Activated naive CD4-positive, alpha-beta T cell treated with anti-CD3 and anti-CD28 coated beads for 36 hours (primary cell): ENCODE measurements at regions of chr4 and their contacts with region 1.

Region 1: DNA sequence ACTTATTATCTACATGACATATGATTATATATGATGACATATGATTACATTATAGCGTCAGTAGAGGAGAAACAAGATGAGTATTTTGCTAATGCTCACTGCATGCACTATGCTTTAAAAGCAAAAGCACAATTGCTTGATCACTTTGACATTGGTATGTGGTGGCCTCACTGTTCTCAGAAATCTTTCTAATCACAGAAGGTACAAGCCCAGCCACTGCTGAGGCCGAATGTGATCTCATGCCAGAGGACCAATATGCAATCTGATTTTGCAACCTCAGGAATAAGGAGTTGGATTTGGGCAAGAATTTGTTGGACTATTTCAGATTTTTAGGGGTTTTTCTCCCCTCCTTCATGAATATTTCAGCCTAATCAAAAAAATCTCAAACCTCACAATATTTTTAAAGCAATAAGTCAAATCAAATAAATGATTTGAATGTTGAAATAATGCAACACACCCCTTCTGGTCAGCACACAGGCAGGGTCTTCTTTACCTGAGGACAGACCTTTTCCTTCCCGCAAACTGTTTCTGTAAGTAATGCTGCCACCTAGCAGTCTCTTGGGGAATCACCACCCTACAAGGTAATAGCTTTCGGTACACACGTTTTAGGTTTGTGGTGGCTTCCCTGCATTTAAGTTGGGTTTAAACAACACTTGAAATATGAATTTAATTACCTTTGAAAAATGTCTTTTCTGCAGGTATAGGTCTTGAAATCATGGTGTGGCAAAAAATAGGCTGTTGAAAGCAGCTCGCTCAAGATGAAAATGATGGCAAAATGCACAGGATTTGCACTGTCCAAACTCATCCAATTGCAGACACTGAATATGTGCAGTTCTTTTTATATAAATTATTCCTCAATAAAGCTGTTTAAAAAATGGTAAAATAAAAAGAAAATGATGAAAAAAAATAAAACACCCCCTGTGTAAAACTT is 4.8 kb upstream of the CXCL13 start:
- DNase-seq: peak; percentile 59
- H3K4me3 Mint-ChIP-seq: no peak overlapping the region
- H3K27ac Mint-ChIP-seq: no peak overlapping the region
- H3K4me1 Mint-ChIP-seq: peaks cover 13% of the 10 kb centered on the region
- H3K27me3 Mint-ChIP-seq: peaks cover 11% of the 10 kb centered on the region

Region 2: DNA sequence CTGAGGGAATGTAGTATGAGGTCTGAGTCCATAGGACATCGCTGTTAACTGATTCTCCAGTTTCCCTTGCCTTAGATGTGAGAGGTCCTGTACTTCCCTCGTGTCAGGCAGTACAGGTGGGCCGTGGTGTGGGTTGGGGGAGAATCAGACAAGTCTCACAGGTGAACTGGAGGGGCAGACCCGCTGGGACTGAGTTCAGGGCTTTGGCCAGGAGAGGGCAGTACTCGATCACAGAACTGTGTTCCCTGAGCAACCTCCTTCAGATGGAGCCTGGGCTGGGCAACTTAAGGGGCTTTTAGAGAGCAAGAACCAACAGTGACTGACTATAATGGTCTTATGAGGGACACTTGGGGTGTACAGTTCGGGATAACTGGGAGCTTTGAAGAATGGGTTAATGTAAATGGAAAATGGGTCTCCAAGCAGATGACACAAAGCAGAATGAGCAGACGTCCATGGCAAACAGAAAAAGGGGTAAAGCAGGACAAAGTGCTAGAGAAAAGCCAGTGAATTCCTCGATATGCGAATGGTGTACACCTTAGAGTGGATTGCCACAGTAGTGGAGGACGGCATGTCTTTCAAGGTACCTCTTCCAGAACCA is 360.2 kb before region 1 on chr4:
- CTCF ChIA-PET with region 1: no interaction called
- intact Hi-C with region 1: loop called (anchors 1 kb)
- DNase-seq: peak; percentile 84
- H3K4me3 Mint-ChIP-seq: no peak overlapping the region
- H3K27ac Mint-ChIP-seq: no peak overlapping the region
- H3K4me1 Mint-ChIP-seq: no peaks in the 10 kb centered on the region
- H3K27me3 Mint-ChIP-seq: peaks cover 5% of the 10 kb centered on the region

Region 3: DNA sequence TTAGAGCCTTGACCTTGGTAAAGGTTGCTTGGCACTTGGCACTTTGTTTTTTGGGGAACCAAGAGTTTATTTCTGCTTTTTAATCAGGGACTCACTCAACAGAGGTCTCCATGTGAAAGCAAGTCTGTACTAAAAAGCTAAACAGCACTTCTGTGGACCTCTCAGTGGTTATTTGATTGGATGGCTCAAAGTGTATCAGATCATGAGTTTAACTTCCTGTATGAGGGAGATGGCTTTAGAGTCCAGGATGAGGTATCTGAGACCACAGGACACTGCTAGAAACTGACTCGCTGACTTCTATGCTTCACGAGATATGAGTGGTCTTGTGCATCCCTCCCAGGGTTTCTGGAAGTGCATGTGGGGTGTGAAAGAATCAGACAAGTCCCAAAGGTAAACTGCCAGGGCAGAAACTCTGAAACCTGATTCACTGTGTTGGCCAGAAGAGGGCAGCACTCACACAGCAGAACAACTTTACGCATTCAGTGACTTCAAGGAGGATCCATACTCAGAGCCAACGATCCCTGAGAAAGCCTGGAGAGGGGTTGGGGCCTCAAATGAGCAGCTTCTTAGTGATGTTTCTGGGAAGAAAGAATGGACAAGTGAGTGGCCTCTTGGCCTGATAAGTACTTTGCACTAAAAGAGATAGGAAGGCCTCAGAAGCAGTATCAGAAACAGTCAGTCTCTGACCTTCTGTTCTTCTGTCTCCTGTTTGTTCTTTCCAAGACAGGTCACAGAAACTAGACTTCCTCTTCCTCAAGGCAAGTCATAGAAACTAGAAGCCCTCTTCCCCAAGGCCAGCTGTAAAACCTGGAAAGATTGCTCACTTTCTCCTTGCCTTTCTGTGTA is 215.4 kb before region 1 on chr4:
- CTCF ChIA-PET with region 1: interaction called, 46 read pairs
- intact Hi-C with region 1: loop called (anchors 1 kb)
- DNase-seq: peak; percentile 78
- H3K4me3 Mint-ChIP-seq: no peak overlapping the region
- H3K27ac Mint-ChIP-seq: no peak overlapping the region
- H3K4me1 Mint-ChIP-seq: no peaks in the 10 kb centered on the region
- H3K27me3 Mint-ChIP-seq: no peaks in the 10 kb centered on the region

Region 4: GRCh38 chr4:77465271-77465670 is 135.5 kb before region 1 on chr4:
- CTCF ChIA-PET with region 1: interaction called, 253 read pairs
- intact Hi-C with region 1: loop called (anchors 1 kb)
- DNase-seq: peak; percentile 62
- H3K4me3 Mint-ChIP-seq: no peak overlapping the region
- H3K27ac Mint-ChIP-seq: no peak overlapping the region
- H3K4me1 Mint-ChIP-seq: no peaks in the 10 kb centered on the region
- H3K27me3 Mint-ChIP-seq: peaks cover 9% of the 10 kb centered on the region

Region 5: GRCh38 chr4:77613267-77613666 is 12.5 kb after region 1 on chr4:
- CTCF ChIA-PET with region 1: interaction called, 40 read pairs
- intact Hi-C with region 1: loop called (anchors 2 kb)
- DNase-seq: no peak
- H3K4me3 Mint-ChIP-seq: no peak overlapping the region
- H3K27ac Mint-ChIP-seq: no peak overlapping the region
- H3K4me1 Mint-ChIP-seq: no peaks in the 10 kb centered on the region
- H3K27me3 Mint-ChIP-seq: peaks cover 14% of the 10 kb centered on the region

Region 6: GRCh38 chr4:77629885-77630284 is 29.1 kb after region 1 on chr4:
- CTCF ChIA-PET with region 1: interaction called, 25 read pairs
- intact Hi-C with region 1: loop called (anchors 1 kb)
- DNase-seq: peak; percentile 37
- H3K4me3 Mint-ChIP-seq: no peak overlapping the region
- H3K27ac Mint-ChIP-seq: no peak overlapping the region
- H3K4me1 Mint-ChIP-seq: peaks cover 16% of the 10 kb centered on the region
- H3K27me3 Mint-ChIP-seq: no peaks in the 10 kb centered on the region